GM18951 (cell line): ENCODE measurements at regions of chr2 and their contacts with region 1.

Region 1: DNA sequence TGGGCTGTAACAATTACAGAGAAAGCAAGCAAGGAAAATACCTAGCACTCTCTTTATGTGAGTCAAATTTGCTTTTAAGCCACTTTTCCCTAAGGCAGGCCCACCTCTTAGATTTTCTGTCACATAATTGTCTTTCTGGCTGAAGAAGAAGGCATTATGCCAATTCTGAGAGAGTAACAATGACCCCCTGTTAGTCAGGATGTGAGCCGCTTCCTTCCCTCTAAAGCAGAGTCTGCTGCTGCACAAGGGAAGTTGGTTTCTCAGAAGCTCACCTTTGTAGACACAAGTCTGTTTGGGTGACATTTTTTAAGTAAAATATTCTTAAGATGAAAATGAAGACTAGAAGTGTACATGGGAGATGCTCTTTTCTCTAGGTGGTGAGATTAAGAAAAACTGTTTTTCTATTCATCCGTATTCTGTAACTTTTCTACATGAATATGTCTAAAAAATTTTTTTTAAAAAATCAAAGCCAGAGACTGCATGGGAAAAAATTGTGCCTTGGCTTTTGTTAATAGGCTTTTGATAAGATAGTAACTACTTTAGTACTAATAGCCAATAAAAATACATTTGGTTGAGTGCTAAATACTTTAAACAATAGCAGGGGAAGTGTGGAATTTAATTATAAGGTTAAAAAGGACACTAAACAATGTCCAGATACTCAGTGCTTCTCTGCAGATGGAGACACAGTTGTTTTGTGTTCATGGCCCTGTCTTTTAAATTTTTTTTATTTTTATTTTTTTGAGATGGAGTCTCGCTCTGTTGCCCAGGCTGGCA is 33.4 kb upstream of the VPS54 start:
- POLR2A ChIP-seq: no peak

Region 2: GRCh38 chr2:63755965-63756364 is 296.7 kb before region 1 on chr2:
- in situ Hi-C with region 1: no loop called
- POLR2A ChIP-seq: no peak

Region 3: GRCh38 chr2:64133828-64134227 is 81.2 kb after region 1 on chr2:
- in situ Hi-C with region 1: loop called (anchors 10 kb)
- POLR2A ChIP-seq: no peak

Region 4: GRCh38 chr2:64330281-64331113 is 277.8 kb after region 1 on chr2:
- in situ Hi-C with region 1: loop called (anchors 5 kb)
- POLR2A ChIP-seq: no peak